CD14-positive monocyte (primary cell): ENCODE measurements at regions of chr4 and their contacts with region 1.

Region 1: GRCh38 chr4:151099229-151099975 is at the start of gene RPS3A:
- DNase-seq: peak; percentile 97 to 98 (median 98)
- H3K4me3 ChIP-seq: peak within 1 kb of the TSS; percentile 73 to 96 (median 91)
- H3K4me3 Mint-ChIP-seq: peak within 1 kb of the TSS; percentile 91 to 97
- H3K27ac ChIP-seq: peak within 1 kb of the TSS; percentile 86 to 91
- H3K27ac Mint-ChIP-seq: peak within 1 kb of the TSS; percentile 94 to 99 (median 98)
- H3K4me1 ChIP-seq: peaks cover 29 to 31% of the 10 kb centered on the region in 2 donors
- H3K4me1 Mint-ChIP-seq: peaks cover 27% of the 10 kb centered on the region
- H3K27me3 ChIP-seq: no peaks in the 10 kb centered on the region
- H3K27me3 Mint-ChIP-seq: peaks cover 0 to 2% (median 2%) of the 10 kb centered on the region in 3 donors
- CTCF ChIP-seq: peak; percentile 93
- polyA plus RNA-seq, gene RPS3A: 1,088 to 1,816 (median 1,582) TPM

Region 2: GRCh38 chr4:151760712-151761527 is 661.5 kb after region 1 on chr4 and contains the start of gene GATB:
- intact Hi-C with region 1: loop called in 1 of 2 experiments (anchors 10 kb)
- DNase-seq: peak; percentile 90 to 94 (median 91)
- H3K4me3 ChIP-seq: peak within 1 kb of the TSS; percentile 78 to 99 (median 96)
- H3K4me3 Mint-ChIP-seq: peak within 1 kb of the TSS; percentile 99 to 100
- H3K27ac ChIP-seq: peak within 1 kb of the TSS; percentile 23 to 93
- H3K27ac Mint-ChIP-seq: peak within 1 kb of the TSS; percentile 87 to 99 (median 97)
- H3K4me1 ChIP-seq: peaks cover 10 to 17% of the 10 kb centered on the region in 2 donors
- H3K4me1 Mint-ChIP-seq: peaks cover 11% of the 10 kb centered on the region
- H3K27me3 ChIP-seq: peaks cover 11 to 13% of the 10 kb centered on the region in 2 donors
- H3K27me3 Mint-ChIP-seq: peaks cover 6 to 15% (median 14%) of the 10 kb centered on the region in 3 donors
- CTCF ChIP-seq: peak; percentile 34
- polyA plus RNA-seq, gene GATB: 5.5 to 12.2 (median 9.0) TPM

Region 3: GRCh38 chr4:152779513-152780266 is 1680.3 kb after region 1 on chr4 and contains the starts of genes ARFIP1 and TIGD4:
- intact Hi-C with region 1: loop called in 1 of 2 experiments (anchors 10 kb)
- DNase-seq: peak; percentile 92 to 95 (median 94)
- H3K4me3 ChIP-seq: peak within 1 kb of the TSS; percentile 72 to 95 (median 77)
- H3K4me3 Mint-ChIP-seq: peak within 1 kb of the TSS; percentile 100
- H3K27ac ChIP-seq: peak within 1 kb of the TSS; percentile 83 to 85
- H3K27ac Mint-ChIP-seq: peak within 1 kb of the TSS; percentile 93 to 99 (median 98)
- H3K4me1 ChIP-seq: peaks cover 42 to 54% of the 10 kb centered on the region in 2 donors
- H3K4me1 Mint-ChIP-seq: peaks cover 55% of the 10 kb centered on the region
- H3K27me3 ChIP-seq: peaks cover 0 to 2% of the 10 kb centered on the region in 2 donors
- H3K27me3 Mint-ChIP-seq: peaks cover 4 to 6% (median 4%) of the 10 kb centered on the region in 3 donors
- CTCF ChIP-seq: peak; percentile 23
- polyA plus RNA-seq, gene ARFIP1: 11.7 to 28.4 (median 27.2) TPM
- polyA plus RNA-seq, gene TIGD4: 0.05 to 0.08 (median 0.07) TPM